H1 (cell line): ENCODE measurements at regions of chr1 and their contacts with region 1.

Region 1: GRCh38 chr1:36342481-36343478 is 19.3 kb upstream of the EVA1B start:
- DNase-seq: peak in 1 of 2 experiments; percentile 79
- H3K4me3 ChIP-seq: no peak overlapping the region
- H3K27ac ChIP-seq: no peak overlapping the region
- H3K4me1 ChIP-seq: no peaks in the 10 kb centered on the region; a peak in 1 of 7 replicates
- H3K27me3 ChIP-seq: no peaks in the 10 kb centered on the region
- CTCF ChIP-seq: peak; percentile 80 to 94 (median 85)
- EP300 ChIP-seq: no peak
- POLR2A ChIP-seq: no peak
- RAD21 ChIP-seq: peak; percentile 86 to 90

Region 2: GRCh38 chr1:36323597-36324352 is 19.0 kb before region 1 on chr1 and contains the start of gene EVA1B:
- CTCF ChIA-PET with region 1: interaction called, 20 read pairs
- POLR2A ChIA-PET with region 1: interaction called, 37 read pairs
- DNase-seq: peak in 1 of 2 experiments; percentile 79
- H3K4me3 ChIP-seq: peak within 1 kb of the TSS; percentile 27 to 67 (median 49)
- H3K27ac ChIP-seq: no peak within 1 kb of the TSS
- H3K4me1 ChIP-seq: peaks cover 0 to 28% (median 16%) of the 10 kb centered on the region in 4 experiments; a peak in 6 of 7 replicates
- H3K27me3 ChIP-seq: peaks cover 0 to 39% (median 20%) of the 10 kb centered on the region in 4 experiments; a peak in 5 of 7 replicates
- CTCF ChIP-seq: no peak
- EP300 ChIP-seq: no peak
- POLR2A ChIP-seq: no peak; a peak in 1 of 3 replicates
- RAD21 ChIP-seq: no peak
- total RNA-seq, gene EVA1B: 10.0 and 10.3 TPM in 2 replicates

Region 3: DNA sequence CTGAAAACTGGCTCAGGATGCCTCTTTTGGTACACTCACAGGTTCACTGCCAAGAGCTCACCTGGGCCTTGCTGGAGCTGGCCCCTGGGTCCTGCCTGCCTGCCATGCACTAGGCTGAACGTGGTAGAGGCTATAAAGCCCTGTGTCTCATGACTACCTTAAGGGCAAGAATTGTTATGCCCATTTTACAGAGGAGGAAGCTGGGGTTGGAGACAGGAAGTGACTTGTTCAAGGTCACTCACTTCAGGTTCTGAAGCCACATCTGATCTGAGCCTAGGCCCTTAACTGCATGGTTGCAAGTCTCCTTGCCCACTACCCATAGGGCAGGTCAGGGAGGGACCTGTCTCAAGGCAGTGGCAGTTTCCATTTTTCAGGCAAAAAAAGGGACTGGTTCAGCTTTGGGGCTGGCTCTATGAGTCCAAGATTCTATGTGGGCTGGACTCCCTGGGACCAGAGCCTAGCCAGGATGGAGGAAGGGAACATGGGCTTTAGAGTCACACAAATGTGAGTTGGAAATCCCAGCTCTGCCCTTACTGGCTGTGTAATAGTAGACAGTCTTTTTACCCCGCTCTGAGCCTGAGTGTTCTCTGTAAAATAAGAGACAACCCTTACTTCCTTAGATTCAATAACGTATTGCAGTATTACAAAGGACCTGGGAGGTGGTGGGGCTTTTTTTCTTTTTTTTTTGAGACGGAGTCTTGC is 35.2 kb after region 1 on chr1:
- CTCF ChIA-PET with region 1: interaction called, 14 read pairs
- POLR2A ChIA-PET with region 1: no interaction called
- DNase-seq: no peak
- H3K4me3 ChIP-seq: no peak overlapping the region
- H3K27ac ChIP-seq: no peak overlapping the region
- H3K4me1 ChIP-seq: peaks cover 4 to 17% (median 10%) of the 10 kb centered on the region in 4 experiments
- H3K27me3 ChIP-seq: no peaks in the 10 kb centered on the region
- CTCF ChIP-seq: no peak
- EP300 ChIP-seq: no peak
- POLR2A ChIP-seq: no peak
- RAD21 ChIP-seq: no peak

Region 4: GRCh38 chr1:36411674-36412520 is 69.1 kb after region 1 on chr1:
- CTCF ChIA-PET with region 1: interaction called, 11 read pairs
- POLR2A ChIA-PET with region 1: interaction called, 3 read pairs
- DNase-seq: no peak
- H3K4me3 ChIP-seq: no peak overlapping the region
- H3K27ac ChIP-seq: no peak overlapping the region
- H3K4me1 ChIP-seq: peaks cover 0 to 3% (median 0%) of the 10 kb centered on the region in 4 experiments; a peak in 1 of 7 replicates
- H3K27me3 ChIP-seq: no peaks in the 10 kb centered on the region
- CTCF ChIP-seq: no peak
- EP300 ChIP-seq: no peak
- POLR2A ChIP-seq: 0 out of 3 replicates have a peak, but pooled peaks of 1 of the 2 experiments have one; percentile 17
- RAD21 ChIP-seq: no peak

Region 5: DNA sequence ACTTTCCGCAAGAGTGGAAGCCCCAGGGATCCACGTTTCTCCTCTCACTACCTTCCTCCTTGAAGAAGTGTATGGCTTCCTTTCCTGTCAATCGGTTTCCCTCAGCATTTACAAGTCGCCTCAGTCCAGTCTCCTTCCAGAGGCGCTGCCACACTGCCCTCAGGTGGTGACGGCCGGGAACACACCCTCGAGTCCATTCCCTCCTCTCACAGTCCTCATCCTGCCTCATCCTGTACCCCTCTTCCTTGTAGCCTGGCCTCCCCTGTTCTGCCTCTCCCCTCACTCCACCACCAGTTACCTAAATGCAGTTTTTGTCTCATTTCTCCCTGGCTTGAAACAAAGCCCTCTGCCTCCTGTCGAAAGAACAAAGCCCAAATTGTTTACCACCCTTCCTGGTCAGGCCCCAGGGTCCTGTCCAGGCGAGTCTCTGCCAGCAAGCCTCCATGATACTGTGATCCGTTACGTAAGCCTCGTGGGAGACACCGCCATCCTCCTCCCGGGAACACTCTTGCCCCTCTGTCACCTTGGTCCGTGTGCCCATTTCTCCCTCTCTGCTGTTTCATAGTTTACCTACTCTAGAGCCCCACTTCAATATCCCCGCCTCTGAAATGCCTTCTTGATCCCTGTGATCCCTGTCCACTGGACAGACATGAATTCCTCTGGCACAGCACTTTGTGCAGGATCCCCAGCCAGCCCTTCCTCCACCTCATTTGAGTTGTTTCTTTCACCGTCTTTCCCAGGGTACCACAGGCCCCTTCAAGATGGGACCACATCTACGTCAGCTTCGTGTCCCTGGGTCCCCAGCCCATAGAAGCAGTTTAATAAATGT is 78.3 kb after region 1 on chr1:
- CTCF ChIA-PET with region 1: interaction called, 30 read pairs
- POLR2A ChIA-PET with region 1: interaction called, 4 read pairs
- DNase-seq: peak; percentile 79 to 100
- H3K4me3 ChIP-seq: no peak overlapping the region
- H3K27ac ChIP-seq: no peak overlapping the region
- H3K4me1 ChIP-seq: no peaks in the 10 kb centered on the region
- H3K27me3 ChIP-seq: no peaks in the 10 kb centered on the region
- CTCF ChIP-seq: peak; percentile 91 to 99 (median 99)
- EP300 ChIP-seq: no peak
- POLR2A ChIP-seq: no peak
- RAD21 ChIP-seq: peak; percentile 94 to 96

Region 6: DNA sequence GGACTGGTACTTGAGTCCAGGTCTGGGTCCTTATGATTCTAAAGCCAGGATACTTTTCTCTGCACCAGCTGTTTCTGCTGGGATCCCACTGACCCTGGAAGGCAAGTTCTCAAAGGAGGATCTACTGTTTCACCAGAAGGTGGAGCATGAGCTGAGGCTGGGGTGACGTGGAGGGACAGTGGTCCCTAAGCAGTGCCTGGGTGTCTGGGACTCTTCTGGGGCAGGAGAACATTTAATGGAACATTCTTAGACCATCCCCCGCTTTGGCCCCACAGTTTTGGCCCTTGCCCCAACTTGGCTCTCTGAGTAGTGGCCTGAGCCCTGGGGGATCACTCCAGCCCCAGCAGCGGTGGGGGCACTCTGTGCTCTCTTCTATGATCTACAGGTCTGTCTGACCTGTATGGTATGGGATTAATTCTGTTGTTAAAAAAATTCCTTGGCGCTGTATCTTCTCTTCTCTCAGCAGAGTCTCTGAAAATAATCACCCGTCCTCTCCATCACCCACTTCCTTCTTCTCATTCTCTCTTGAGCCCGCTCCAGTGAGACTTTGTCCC is 200.3 kb after region 1 on chr1:
- CTCF ChIA-PET with region 1: no interaction called
- POLR2A ChIA-PET with region 1: no interaction called
- DNase-seq: no peak
- H3K4me3 ChIP-seq: no peak overlapping the region
- H3K27ac ChIP-seq: no peak overlapping the region
- H3K4me1 ChIP-seq: no peaks in the 10 kb centered on the region; a peak in 1 of 7 replicates
- H3K27me3 ChIP-seq: no peaks in the 10 kb centered on the region
- CTCF ChIP-seq: peak; percentile 21 to 76 (median 68)
- EP300 ChIP-seq: no peak
- POLR2A ChIP-seq: no peak
- RAD21 ChIP-seq: peak; percentile 21 to 45; a peak in 2 of 4 replicates